CD14-positive monocyte (primary cell): ENCODE measurements at regions of chr6 and their contacts with region 1.

Region 1: GRCh38 chr6:26366504-26366903 is 1.5 kb downstream of the BTN3A2 start:
- DNase-seq: no peak
- H3K4me3 ChIP-seq: peak overlapping the region in 1 of 3 experiments; percentile 86
- H3K4me3 Mint-ChIP-seq: peak overlapping the region; percentile 37 to 84
- H3K27ac ChIP-seq: peak overlapping the region; percentile 50 to 61
- H3K27ac Mint-ChIP-seq: peak overlapping the region; percentile 50 to 91 (median 78)
- H3K4me1 ChIP-seq: peaks cover 46 to 54% of the 10 kb centered on the region in 2 donors
- H3K4me1 Mint-ChIP-seq: peaks cover 43% of the 10 kb centered on the region
- H3K27me3 ChIP-seq: no peaks in the 10 kb centered on the region
- H3K27me3 Mint-ChIP-seq: peaks cover 0 to under 1% (median 0%) of the 10 kb centered on the region in 3 donors
- CTCF ChIP-seq: no peak

Region 2: GRCh38 chr6:26401987-26402658 is 35.6 kb after region 1 on chr6 and contains the start of gene BTN3A1:
- intact Hi-C with region 1: loop called in 1 of 2 experiments (anchors 5 kb)
- DNase-seq: peak; percentile 48 to 81 (median 71)
- H3K4me3 ChIP-seq: peak within 1 kb of the TSS; percentile 92 to 100 (median 98)
- H3K4me3 Mint-ChIP-seq: peak within 1 kb of the TSS; percentile 97 to 99
- H3K27ac ChIP-seq: peak within 1 kb of the TSS; percentile 78 to 96
- H3K27ac Mint-ChIP-seq: peak within 1 kb of the TSS; percentile 97 to 99 (median 98)
- H3K4me1 ChIP-seq: peaks cover 37 to 44% of the 10 kb centered on the region in 2 donors
- H3K4me1 Mint-ChIP-seq: peaks cover 61% of the 10 kb centered on the region
- H3K27me3 ChIP-seq: no peaks in the 10 kb centered on the region
- H3K27me3 Mint-ChIP-seq: no peaks in the 10 kb centered on the region
- CTCF ChIP-seq: no peak
- polyA plus RNA-seq, gene BTN3A1: 19.7 to 114 (median 25.1) TPM